ENCODE measurements at regions of chr1 and their contacts with region 1.

Region 1: GRCh38 chr1:218284934-218285635 is at the start of gene RRP15:
- DNase-seq: peak; percentile 99
- ATAC-seq: peak; percentile 94
- H3K4me3 ChIP-seq: peak within 1 kb of the TSS; percentile 88
- H3K27ac ChIP-seq: peak within 1 kb of the TSS; percentile 45
- H3K4me1 ChIP-seq: peaks cover 23% of the 10 kb centered on the region
- H3K27me3 ChIP-seq: no peaks in the 10 kb centered on the region
- CTCF ChIP-seq: no peak
- total RNA-seq, gene RRP15: 25.6 and 39.3 TPM in 2 replicates

Region 2: DNA sequence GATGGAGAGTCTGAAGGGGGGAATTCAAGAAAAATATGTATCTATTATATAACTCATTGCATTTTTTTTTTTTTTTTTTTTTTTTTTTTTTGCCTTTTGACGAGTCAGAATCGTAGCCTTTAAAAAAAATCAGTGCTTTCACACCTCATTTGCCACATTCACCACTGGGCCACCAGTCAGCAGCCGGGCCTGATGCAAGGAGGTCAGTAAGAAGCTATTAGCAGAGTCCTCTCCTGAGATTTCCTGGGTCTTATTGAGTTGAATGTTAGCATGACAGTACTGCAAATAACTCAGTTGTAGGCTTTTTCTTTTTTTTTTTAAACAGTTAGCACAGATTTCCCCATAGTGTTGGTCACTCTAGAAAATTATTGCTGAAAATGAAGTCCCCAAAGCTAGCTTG is 514.2 kb before region 1 on chr1:
- CTCF ChIA-PET with region 1: interaction called, 12 read pairs
- POLR2A ChIA-PET with region 1: no interaction called
- intact Hi-C with region 1: no loop called
- DNase-seq: no peak
- ATAC-seq: no peak
- H3K4me3 ChIP-seq: no peak overlapping the region
- H3K27ac ChIP-seq: no peak overlapping the region
- H3K4me1 ChIP-seq: no peaks in the 10 kb centered on the region
- H3K27me3 ChIP-seq: no peaks in the 10 kb centered on the region
- CTCF ChIP-seq: no peak

Region 3: GRCh38 chr1:218209351-218209861 is 75.7 kb before region 1 on chr1:
- CTCF ChIA-PET with region 1: no interaction called
- POLR2A ChIA-PET with region 1: interaction called, 3 read pairs
- intact Hi-C with region 1: loop called (anchors 1 kb)
- DNase-seq: peak; percentile 98
- ATAC-seq: peak; percentile 96
- H3K4me3 ChIP-seq: peak overlapping the region; percentile 20; the same call in 1 of the 2 replicates
- H3K27ac ChIP-seq: peak overlapping the region; percentile 52
- H3K4me1 ChIP-seq: peaks cover 34% of the 10 kb centered on the region
- H3K27me3 ChIP-seq: no peaks in the 10 kb centered on the region
- CTCF ChIP-seq: no peak